H1 (cell line): ENCODE measurements at regions of chr1 and their contacts with region 1.

Region 1: GRCh38 chr1:23979878-23980724 is at the start of gene SRSF10:
- DNase-seq: peak; percentile 93 to 99
- H3K4me3 ChIP-seq: peak within 1 kb of the TSS; percentile 68 to 95 (median 90)
- H3K27ac ChIP-seq: peak within 1 kb of the TSS; percentile 99
- H3K4me1 ChIP-seq: peaks cover 4 to 10% (median 6%) of the 10 kb centered on the region in 4 experiments
- H3K27me3 ChIP-seq: no peaks in the 10 kb centered on the region
- CTCF ChIP-seq: peak in 1 of 3 experiments; percentile 28; a peak in 2 of 4 replicates
- EP300 ChIP-seq: no peak
- POLR2A ChIP-seq: peak; percentile 98 to 99
- RAD21 ChIP-seq: no peak
- total RNA-seq, gene SRSF10: 194 TPM in 2 replicates

Region 2: DNA sequence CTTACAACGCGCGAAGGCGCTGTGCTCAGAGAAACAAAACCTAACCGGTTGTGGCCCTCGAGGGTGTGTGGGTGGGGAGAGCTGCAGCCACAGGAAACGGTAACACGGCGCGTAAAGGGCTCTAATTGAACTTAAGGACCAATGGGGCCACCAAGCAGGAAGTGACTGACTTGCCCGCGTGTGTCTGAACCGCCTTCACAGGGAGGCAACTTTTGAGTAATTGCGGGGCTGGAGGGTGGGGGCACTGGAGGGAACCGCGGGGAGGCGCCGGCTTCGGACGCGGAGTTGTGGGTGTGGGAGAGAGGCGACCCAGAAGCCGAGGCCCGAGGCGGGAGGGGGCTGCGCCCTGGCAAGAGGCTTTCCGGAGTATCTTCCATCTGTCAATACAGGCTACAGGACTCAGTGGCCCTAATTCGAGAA is 21.1 kb before region 1 on chr1:
- CTCF ChIA-PET with region 1: interaction called, 3 read pairs
- POLR2A ChIA-PET with region 1: interaction called, 267 read pairs
- DNase-seq: peak in 1 of 2 experiments; percentile 39
- H3K4me3 ChIP-seq: peak overlapping the region; percentile 53 to 90 (median 84)
- H3K27ac ChIP-seq: peak overlapping the region; percentile 86
- H3K4me1 ChIP-seq: peaks cover 2 to 4% (median 3%) of the 10 kb centered on the region in 4 experiments; a peak in 6 of 7 replicates
- H3K27me3 ChIP-seq: no peaks in the 10 kb centered on the region
- CTCF ChIP-seq: no peak
- EP300 ChIP-seq: no peak
- POLR2A ChIP-seq: no peak
- RAD21 ChIP-seq: no peak

Region 3: DNA sequence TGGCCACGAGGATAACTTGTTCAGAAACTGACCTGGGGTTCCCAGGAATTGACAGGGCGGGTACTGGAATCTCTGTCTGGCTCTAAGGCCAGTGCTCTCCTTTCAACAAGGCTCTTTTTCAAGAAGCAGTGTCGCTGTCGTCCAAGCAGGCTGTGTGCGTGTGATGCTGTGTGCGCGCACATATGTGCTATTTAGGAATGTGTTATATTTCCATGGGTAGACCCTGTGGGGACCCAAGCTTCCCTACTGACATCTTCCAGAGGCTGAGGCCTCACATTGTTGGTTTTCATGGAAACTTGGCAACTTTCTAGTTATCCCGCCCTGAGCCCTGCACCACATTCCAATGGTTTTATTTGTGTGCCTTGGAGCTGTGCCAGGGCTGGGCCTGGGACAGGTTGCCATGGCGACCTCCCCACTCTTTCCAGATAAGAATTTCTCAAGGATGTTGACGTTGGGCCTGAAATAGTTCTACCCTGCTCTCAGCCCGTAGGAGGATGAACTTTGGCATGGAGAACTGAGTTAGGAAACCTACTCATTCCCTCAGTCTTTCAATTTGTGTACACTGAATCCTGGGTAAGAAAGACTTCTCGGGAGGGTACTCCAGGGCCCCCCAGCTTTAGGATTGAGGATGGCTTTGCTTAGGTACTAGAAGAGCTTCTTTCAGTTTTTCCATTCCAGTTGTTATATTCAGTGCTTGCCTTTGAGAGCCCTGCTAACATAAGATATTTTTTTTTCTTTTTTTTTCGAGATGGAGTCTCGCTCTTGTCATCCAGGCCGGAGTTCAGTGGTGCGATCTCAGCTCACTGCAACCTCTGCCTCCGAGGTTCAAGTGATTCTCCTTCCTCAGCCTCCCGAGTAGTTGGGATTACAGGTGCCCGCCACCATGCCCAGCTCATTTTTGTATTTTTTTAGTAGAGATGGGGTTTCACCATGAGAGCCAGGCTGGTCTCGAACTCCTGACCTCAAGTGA is 38.8 kb after region 1 on chr1:
- CTCF ChIA-PET with region 1: no interaction called
- POLR2A ChIA-PET with region 1: interaction called, 14 read pairs
- DNase-seq: peak; percentile 21 to 53
- H3K4me3 ChIP-seq: no peak overlapping the region
- H3K27ac ChIP-seq: no peak overlapping the region
- H3K4me1 ChIP-seq: peaks cover 0 to 12% (median 4%) of the 10 kb centered on the region in 4 experiments; a peak in 5 of 7 replicates
- H3K27me3 ChIP-seq: no peaks in the 10 kb centered on the region
- CTCF ChIP-seq: no peak
- EP300 ChIP-seq: no peak
- POLR2A ChIP-seq: no peak
- RAD21 ChIP-seq: no peak

Region 4: GRCh38 chr1:24027838-24028468 is 47.9 kb after region 1 on chr1:
- CTCF ChIA-PET with region 1: interaction called, 7 read pairs
- POLR2A ChIA-PET with region 1: interaction called, 13 read pairs
- DNase-seq: no peak
- H3K4me3 ChIP-seq: no peak overlapping the region
- H3K27ac ChIP-seq: no peak overlapping the region
- H3K4me1 ChIP-seq: no peaks in the 10 kb centered on the region
- H3K27me3 ChIP-seq: no peaks in the 10 kb centered on the region
- CTCF ChIP-seq: peak in 1 of 3 experiments; percentile 44; a peak in 2 of 4 replicates
- EP300 ChIP-seq: no peak
- POLR2A ChIP-seq: no peak
- RAD21 ChIP-seq: peak; percentile 31 to 37